ENCODE measurements at regions of chr14 and their contacts with region 1.

Region 1: GRCh38 chr14:23555882-23556699 is at the start of gene THTPA:
- DNase-seq: peak; percentile 96
- ATAC-seq: peak; percentile 83
- H3K4me3 Mint-ChIP-seq: peak within 1 kb of the TSS; percentile 95
- H3K27ac Mint-ChIP-seq: peak within 1 kb of the TSS; percentile 93
- H3K4me1 Mint-ChIP-seq: peaks cover 36% of the 10 kb centered on the region
- H3K27me3 Mint-ChIP-seq: no peaks in the 10 kb centered on the region
- total RNA-seq, gene THTPA: 8.3 to 8.5 TPM

Region 2: GRCh38 chr14:22112004-22112403 is 1444.1 kb before region 1 on chr14:
- CTCF ChIA-PET with region 1: no interaction called
- POLR2A ChIA-PET with region 1: no interaction called
- intact Hi-C with region 1: no loop called
- DNase-seq: peak; percentile 67
- ATAC-seq: no peak
- H3K4me3 Mint-ChIP-seq: peak overlapping the region; percentile 71
- H3K27ac Mint-ChIP-seq: peak overlapping the region; percentile 88
- H3K4me1 Mint-ChIP-seq: peaks cover 22% of the 10 kb centered on the region
- H3K27me3 Mint-ChIP-seq: no peaks in the 10 kb centered on the region

Region 3: DNA sequence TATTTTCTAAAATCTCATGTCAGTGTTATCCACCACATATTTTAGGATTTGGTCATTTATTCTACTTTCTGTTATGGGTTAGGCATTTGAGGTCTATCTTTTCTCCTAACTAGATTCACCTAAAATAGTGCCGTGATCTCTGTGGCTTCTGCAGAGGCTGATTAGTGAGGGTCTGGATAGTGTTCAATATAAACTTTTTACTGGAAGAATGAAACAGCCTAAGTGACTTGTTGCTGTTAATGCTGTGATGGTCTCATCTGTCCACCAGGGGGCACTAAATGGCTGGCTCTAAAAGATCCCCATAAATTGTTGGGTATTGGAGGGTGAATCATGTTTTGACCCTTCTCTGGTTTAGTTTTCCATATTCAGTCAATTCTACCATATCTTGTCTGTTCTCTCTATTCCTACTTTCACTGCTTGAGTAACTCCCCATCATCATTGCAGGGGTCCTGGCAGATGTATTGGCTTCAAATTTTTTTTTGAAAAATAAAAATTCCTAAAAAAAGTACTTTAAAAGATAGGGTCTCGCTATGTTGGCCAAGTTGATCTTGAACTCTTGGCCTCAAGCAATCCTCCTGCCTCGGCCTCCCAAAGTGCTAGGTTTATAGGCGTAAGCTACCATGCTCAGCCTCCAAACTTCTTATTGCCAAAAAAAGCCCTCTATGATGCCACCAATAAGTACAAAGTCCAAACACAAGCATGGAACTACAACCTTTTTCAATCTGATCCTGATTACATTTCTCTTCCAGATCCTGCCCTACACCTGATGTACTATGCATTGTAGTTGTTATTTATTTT is 227.9 kb before region 1 on chr14:
- CTCF ChIA-PET with region 1: interaction called, 14 read pairs
- POLR2A ChIA-PET with region 1: no interaction called
- intact Hi-C with region 1: loop called (anchors 2 to 5 kb)
- DNase-seq: peak; percentile 82
- ATAC-seq: peak; percentile 92
- H3K4me3 Mint-ChIP-seq: no peak overlapping the region
- H3K27ac Mint-ChIP-seq: no peak overlapping the region
- H3K4me1 Mint-ChIP-seq: peaks cover 6% of the 10 kb centered on the region
- H3K27me3 Mint-ChIP-seq: no peaks in the 10 kb centered on the region

Region 4: GRCh38 chr14:23478111-23478759 is 77.9 kb before region 1 on chr14:
- CTCF ChIA-PET with region 1: interaction called, 150 read pairs
- POLR2A ChIA-PET with region 1: interaction called, 6 read pairs
- intact Hi-C with region 1: loop called in 1 of 2 experiments (anchors 1 kb)
- DNase-seq: peak; percentile 79
- ATAC-seq: peak; percentile 63
- H3K4me3 Mint-ChIP-seq: no peak overlapping the region
- H3K27ac Mint-ChIP-seq: no peak overlapping the region
- H3K4me1 Mint-ChIP-seq: peaks cover 11% of the 10 kb centered on the region
- H3K27me3 Mint-ChIP-seq: no peaks in the 10 kb centered on the region

Region 5: DNA sequence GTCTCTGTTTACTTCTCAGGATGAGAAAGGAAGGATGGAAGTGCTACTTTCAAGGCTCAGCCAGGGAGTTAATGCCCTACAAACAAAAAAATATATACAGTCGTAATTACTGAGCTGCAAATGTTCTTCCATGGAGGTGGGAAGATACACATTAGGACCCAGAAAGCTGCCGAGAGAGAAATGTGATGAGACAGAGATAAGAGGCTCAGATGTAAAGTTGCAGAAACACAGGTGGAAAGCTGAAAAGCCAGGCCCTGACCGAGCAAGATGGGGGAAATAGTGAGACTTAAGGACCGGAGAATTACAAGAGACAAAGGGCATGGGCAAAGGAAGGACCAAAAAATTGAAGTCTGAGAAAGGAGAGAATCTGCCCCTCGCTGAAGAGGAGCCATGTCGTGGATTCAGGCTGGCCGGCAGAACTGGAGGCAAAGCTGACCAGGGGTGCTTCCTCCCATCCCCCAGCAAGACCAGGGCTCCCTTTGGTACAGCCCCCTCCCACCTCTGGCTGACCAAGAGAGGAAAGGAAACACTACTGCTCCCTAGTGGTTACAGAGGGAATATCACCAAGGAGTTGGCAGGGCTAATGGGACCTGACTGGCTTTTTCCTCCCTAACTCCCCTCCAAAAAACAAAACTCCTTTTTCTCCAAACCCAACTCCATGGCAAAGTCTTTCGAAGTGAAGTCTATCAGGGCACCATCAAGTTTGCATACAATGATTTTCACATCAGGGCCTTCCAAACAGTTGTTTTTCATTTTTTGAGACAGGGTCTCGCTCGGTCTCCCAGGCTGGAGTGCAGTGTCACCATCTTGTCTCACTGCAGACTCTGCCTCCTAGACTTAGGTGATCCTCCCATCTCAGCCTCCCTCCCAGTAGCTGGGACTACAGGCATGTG is 16.6 kb before region 1 on chr14:
- CTCF ChIA-PET with region 1: interaction called, 25 read pairs
- POLR2A ChIA-PET with region 1: no interaction called
- intact Hi-C with region 1: no loop called
- DNase-seq: peak; percentile 35
- ATAC-seq: peak; percentile 81
- H3K4me3 Mint-ChIP-seq: no peak overlapping the region
- H3K27ac Mint-ChIP-seq: no peak overlapping the region
- H3K4me1 Mint-ChIP-seq: no peaks in the 10 kb centered on the region
- H3K27me3 Mint-ChIP-seq: no peaks in the 10 kb centered on the region

Region 6: GRCh38 chr14:24442273-24443052 is 886.4 kb after region 1 on chr14 and contains the start of gene SDR39U1:
- CTCF ChIA-PET with region 1: no interaction called
- POLR2A ChIA-PET with region 1: no interaction called
- intact Hi-C with region 1: loop called in 1 of 2 experiments (anchors 5 kb)
- DNase-seq: peak; percentile 98
- ATAC-seq: peak; percentile 92
- H3K4me3 Mint-ChIP-seq: peak within 1 kb of the TSS; percentile 97
- H3K27ac Mint-ChIP-seq: peak within 1 kb of the TSS; percentile 99
- H3K4me1 Mint-ChIP-seq: peaks cover 41% of the 10 kb centered on the region
- H3K27me3 Mint-ChIP-seq: no peaks in the 10 kb centered on the region
- total RNA-seq, gene SDR39U1: 40.9 to 47.8 TPM